ENCODE measurements at regions of chr3 and their contacts with region 1.

Region 1: GRCh38 chr3:15377961-15378791 is 45.8 kb upstream of the SH3BP5 start:
- DNase-seq: peak; percentile 79 to 98 (median 82)
- ATAC-seq: peak; percentile 99
- H3K4me3 ChIP-seq: no peak overlapping the region
- H3K27ac ChIP-seq: peak overlapping the region; percentile 58
- H3K4me1 ChIP-seq: peaks cover 5 to 16% of the 10 kb centered on the region in 2 experiments; a peak in 4 of 5 replicates
- H3K27me3 ChIP-seq: no peaks in the 10 kb centered on the region
- CTCF ChIP-seq: peak; percentile 91 to 99 (median 97)
- EP300 ChIP-seq: peak; percentile 78
- POLR2A ChIP-seq: no peak
- RAD21 ChIP-seq: peak; percentile 99

Region 2: DNA sequence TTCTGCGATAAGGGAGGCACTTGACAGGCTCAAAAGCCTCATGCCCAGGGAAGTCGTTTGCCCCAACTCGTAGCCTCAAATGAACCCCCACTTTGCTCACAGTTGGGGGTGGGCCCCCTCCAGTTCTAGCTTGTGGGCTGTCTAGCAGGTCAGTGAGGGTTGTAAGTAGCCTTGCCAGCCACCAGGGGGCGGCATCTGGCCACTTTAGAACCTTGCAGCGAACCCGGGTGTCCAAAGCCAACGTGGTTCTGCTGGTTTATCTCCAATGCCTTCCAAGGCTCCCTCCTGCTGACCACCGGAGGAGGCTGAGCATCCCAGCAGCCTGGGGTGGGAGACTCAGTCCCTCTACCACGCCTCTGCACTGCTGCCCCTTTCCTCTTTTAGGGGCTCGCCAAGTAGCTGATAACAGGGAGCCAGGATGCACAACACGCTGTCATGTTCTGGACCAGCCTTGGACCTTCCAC is 270.1 kb before region 1 on chr3:
- CTCF ChIA-PET with region 1: interaction called, 3 read pairs
- POLR2A ChIA-PET with region 1: no interaction called
- in situ Hi-C with region 1: loop called (anchors 10 kb)
- intact Hi-C with region 1: loop called (anchors 2 kb)
- DNase-seq: peak; percentile 91 to 95 (median 92)
- ATAC-seq: peak; percentile 98
- H3K4me3 ChIP-seq: no peak overlapping the region
- H3K27ac ChIP-seq: no peak overlapping the region
- H3K4me1 ChIP-seq: peaks cover 0 to 5% of the 10 kb centered on the region in 2 experiments; a peak in 1 of 5 replicates
- H3K27me3 ChIP-seq: peaks cover 0 to 6% of the 10 kb centered on the region in 2 experiments; a peak in 2 of 5 replicates
- CTCF ChIP-seq: peak; percentile 93 to 99 (median 93)
- EP300 ChIP-seq: no peak
- POLR2A ChIP-seq: no peak
- RAD21 ChIP-seq: peak; percentile 86 to 92

Region 3: DNA sequence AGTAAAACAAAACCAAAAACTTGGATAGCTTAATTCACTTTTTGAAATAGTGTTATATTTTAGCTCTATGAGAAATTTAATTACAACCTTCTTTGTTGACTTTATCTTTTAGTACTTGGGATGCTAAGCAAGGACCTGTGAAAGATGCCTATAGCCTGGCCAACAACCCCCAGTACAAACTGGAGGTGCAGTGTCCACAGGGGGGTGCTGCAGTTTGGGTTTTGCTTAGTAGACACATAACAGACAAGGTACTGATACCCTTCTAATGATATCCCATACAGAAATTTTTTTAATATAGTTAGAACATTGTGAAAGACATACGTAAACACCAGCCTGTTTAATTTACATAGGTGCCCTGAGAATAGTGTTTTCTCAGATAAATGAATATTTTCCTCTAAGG is 136.8 kb before region 1 on chr3:
- CTCF ChIA-PET with region 1: interaction called, 9 read pairs
- POLR2A ChIA-PET with region 1: no interaction called
- in situ Hi-C with region 1: no loop called
- intact Hi-C with region 1: loop called (anchors 1 kb)
- DNase-seq: peak; percentile 66 to 69 (median 67)
- ATAC-seq: peak; percentile 90
- H3K4me3 ChIP-seq: no peak overlapping the region
- H3K27ac ChIP-seq: no peak overlapping the region
- H3K4me1 ChIP-seq: no peaks in the 10 kb centered on the region
- H3K27me3 ChIP-seq: no peaks in the 10 kb centered on the region
- CTCF ChIP-seq: peak; percentile 60 to 75 (median 66)
- EP300 ChIP-seq: no peak
- POLR2A ChIP-seq: no peak
- RAD21 ChIP-seq: peak; percentile 61 to 69

Region 4: GRCh38 chr3:15309662-15310335 is 68.4 kb before region 1 on chr3:
- CTCF ChIA-PET with region 1: no interaction called
- POLR2A ChIA-PET with region 1: no interaction called
- in situ Hi-C with region 1: no loop called
- intact Hi-C with region 1: loop called (anchors 2 kb)
- DNase-seq: no peak
- ATAC-seq: peak; percentile 13; the same call in 2 of the 3 replicates
- H3K4me3 ChIP-seq: no peak overlapping the region
- H3K27ac ChIP-seq: peak overlapping the region; percentile 77
- H3K4me1 ChIP-seq: peaks cover 60 to 87% of the 10 kb centered on the region in 2 experiments
- H3K27me3 ChIP-seq: no peaks in the 10 kb centered on the region
- CTCF ChIP-seq: no peak
- EP300 ChIP-seq: no peak
- POLR2A ChIP-seq: no peak
- RAD21 ChIP-seq: no peak

Region 5: DNA sequence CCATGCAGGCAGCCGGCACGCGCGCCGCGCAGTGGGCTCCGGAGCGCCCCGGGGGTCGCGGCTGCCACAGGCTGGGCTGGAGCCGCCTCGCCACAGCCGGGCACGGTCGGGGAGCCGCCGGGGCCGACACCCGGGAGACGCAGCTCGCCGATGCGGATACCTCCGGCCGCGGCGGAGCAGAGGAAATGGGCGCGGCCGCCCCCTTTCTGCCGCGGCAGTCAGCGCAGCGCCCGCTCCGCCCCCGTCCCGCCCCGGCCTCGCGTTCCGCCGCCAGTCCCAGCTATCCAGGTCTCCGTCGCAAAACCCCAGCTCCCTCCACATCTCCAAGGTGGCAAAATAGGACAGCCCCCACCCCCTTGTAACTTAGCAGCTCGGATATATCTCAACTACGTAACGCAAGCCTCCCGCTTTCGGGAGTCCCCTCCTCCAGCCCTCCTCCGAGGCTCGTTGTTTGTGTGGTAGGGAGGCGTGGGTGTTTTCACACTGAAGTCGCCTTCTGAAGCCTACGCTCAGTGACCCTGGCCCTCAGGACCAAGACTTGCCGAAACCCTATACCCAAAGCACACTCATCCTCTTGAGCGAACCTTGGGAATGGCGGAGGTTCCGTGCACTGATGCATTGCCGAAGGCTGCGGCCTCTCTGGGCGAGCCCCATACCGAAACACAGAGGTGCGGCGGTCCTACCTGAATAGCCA is 45.6 kb before region 1 on chr3 and contains the start of gene SH3BP5:
- CTCF ChIA-PET with region 1: no interaction called
- POLR2A ChIA-PET with region 1: no interaction called
- in situ Hi-C with region 1: no loop called
- intact Hi-C with region 1: loop called (anchors 1 kb)
- DNase-seq: peak; percentile 89 to 93 (median 92)
- ATAC-seq: peak; percentile 98
- H3K4me3 ChIP-seq: peak within 1 kb of the TSS; percentile 85
- H3K27ac ChIP-seq: peak within 1 kb of the TSS; percentile 71
- H3K4me1 ChIP-seq: peaks cover 23 to 31% of the 10 kb centered on the region in 2 experiments
- H3K27me3 ChIP-seq: no peaks in the 10 kb centered on the region
- CTCF ChIP-seq: peak; percentile 69 to 88 (median 77)
- EP300 ChIP-seq: no peak
- POLR2A ChIP-seq: peak; percentile 54; the same call in 1 of the 2 replicates
- RAD21 ChIP-seq: peak; percentile 73 to 81
- polyA plus RNA-seq, gene SH3BP5: 2.9 to 3.5 TPM

Region 6: GRCh38 chr3:15405448-15406050 is 27.4 kb after region 1 on chr3:
- CTCF ChIA-PET with region 1: interaction called, 3 read pairs
- POLR2A ChIA-PET with region 1: no interaction called
- in situ Hi-C with region 1: no loop called
- intact Hi-C with region 1: loop called (anchors 2 kb)
- DNase-seq: peak; percentile 62 to 76 (median 63)
- ATAC-seq: peak; percentile 89
- H3K4me3 ChIP-seq: no peak overlapping the region
- H3K27ac ChIP-seq: no peak overlapping the region
- H3K4me1 ChIP-seq: no peaks in the 10 kb centered on the region
- H3K27me3 ChIP-seq: no peaks in the 10 kb centered on the region
- CTCF ChIP-seq: peak; percentile 62 to 88 (median 72)
- EP300 ChIP-seq: no peak
- POLR2A ChIP-seq: no peak
- RAD21 ChIP-seq: peak; percentile 77 to 92